PC-3 (cell line): ENCODE measurements at regions of chr6 and their contacts with region 1.

Region 1: DNA sequence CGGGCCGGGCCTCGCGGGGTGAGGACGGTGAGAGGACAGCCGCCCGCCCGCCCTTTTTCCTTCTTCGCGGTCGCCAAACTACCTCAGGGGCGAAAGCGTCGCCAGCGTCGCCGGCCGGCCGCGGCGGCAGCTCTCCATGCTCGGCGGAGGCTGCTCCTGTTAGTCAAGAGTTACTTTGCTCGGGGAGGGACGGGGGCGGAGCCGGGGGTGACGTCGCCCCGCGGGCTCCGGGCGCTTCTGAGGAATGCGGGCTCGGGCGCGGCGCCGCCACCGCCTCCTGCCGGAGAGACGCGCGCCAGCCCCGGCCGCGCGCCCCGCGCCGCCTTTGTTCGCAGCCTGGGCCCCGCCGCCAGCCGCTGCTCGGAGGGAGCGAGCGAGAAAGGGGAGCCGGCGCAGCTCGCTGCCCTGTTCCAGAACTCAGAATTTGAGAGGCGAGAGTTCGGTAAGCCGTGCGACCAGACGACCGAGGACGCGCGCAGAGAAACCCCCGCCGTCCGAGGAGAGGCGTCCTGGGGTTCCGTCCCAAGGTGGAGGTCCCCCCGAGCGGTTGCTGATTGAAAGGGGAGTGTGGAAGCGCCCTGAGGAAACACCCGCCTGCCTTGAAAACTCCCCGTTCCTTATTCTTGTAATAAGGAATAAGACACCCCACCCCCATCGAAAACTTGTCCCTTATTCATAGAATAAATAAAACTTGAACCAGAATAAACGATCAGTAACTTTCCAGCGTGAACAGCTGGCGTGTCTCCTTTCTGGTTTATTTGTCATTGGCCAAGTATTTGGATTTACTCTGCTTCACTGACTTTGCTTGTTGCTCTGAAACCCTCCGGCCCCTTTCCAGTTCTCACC is at the start of gene PTPRK:
- DNase-seq: peak; percentile 89
- ATAC-seq: peak; percentile 74
- H3K4me3 ChIP-seq: peak within 1 kb of the TSS; percentile 94
- H3K27ac ChIP-seq: peak within 1 kb of the TSS; percentile 96
- H3K4me1 ChIP-seq: peaks cover 36% of the 10 kb centered on the region
- H3K27me3 ChIP-seq: no peaks in the 10 kb centered on the region
- CTCF ChIP-seq: 0 out of 2 replicates have a peak, but pooled peaks have one; percentile 25
- total RNA-seq, gene PTPRK: 53.8 and 64.7 TPM in 2 replicates

Region 2: DNA sequence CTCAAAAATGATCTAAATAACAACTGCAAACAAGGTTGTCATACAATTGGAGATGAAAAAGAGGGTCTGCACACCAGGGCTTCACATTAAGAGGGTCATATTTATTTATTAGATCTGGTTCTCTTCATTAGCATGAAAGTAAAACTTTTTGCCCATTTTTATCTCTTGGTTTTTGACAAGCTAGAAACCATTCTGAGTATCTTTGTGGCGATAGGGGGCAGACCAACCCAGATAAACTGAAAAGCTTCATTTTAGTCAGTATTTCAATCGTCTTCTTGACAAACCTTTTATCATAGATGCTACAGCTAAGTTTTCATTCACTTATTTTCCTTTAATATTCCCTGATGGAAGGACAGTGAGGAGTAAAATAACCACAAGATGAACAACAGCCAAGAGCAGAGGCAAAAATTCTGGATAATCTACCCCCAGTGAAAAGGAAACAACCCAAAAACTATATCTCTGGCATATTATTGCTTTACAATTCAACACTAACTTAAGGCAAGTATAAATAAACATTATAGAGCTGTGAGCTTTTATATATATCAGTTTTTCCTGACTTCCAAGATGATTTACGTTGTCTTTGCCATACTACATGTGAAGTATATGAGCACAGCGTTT is 665.0 kb before region 1 on chr6:
- CTCF ChIA-PET with region 1: interaction called, 3 read pairs
- POLR2A ChIA-PET with region 1: no interaction called
- intact Hi-C with region 1: loop called (anchors 5 kb)
- DNase-seq: peak; percentile 58
- ATAC-seq: peak; percentile 50; the same call in 1 of the 2 replicates
- H3K4me3 ChIP-seq: no peak overlapping the region
- H3K27ac ChIP-seq: no peak overlapping the region
- H3K4me1 ChIP-seq: peaks cover 7% of the 10 kb centered on the region; the same call in 1 of the 2 replicates
- H3K27me3 ChIP-seq: no peaks in the 10 kb centered on the region
- CTCF ChIP-seq: peak; percentile 68

Region 3: GRCh38 chr6:128432394-128432793 is 88.3 kb before region 1 on chr6:
- CTCF ChIA-PET with region 1: no interaction called
- POLR2A ChIA-PET with region 1: no interaction called
- intact Hi-C with region 1: loop called (anchors 5 kb)
- DNase-seq: peak; percentile 58
- ATAC-seq: peak; percentile 31; the same call in 1 of the 2 replicates
- H3K4me3 ChIP-seq: no peak overlapping the region
- H3K27ac ChIP-seq: no peak overlapping the region
- H3K4me1 ChIP-seq: peaks cover 7% of the 10 kb centered on the region; the same call in 1 of the 2 replicates
- H3K27me3 ChIP-seq: no peaks in the 10 kb centered on the region
- CTCF ChIP-seq: no peak

Region 4: GRCh38 chr6:128500014-128500413 is 20.6 kb before region 1 on chr6:
- CTCF ChIA-PET with region 1: interaction called, 4 read pairs
- POLR2A ChIA-PET with region 1: interaction called, 11 read pairs
- intact Hi-C with region 1: no loop called
- DNase-seq: peak; percentile 46
- ATAC-seq: peak; percentile 39
- H3K4me3 ChIP-seq: peak overlapping the region; percentile 39; the same call in 1 of the 2 replicates
- H3K27ac ChIP-seq: peak overlapping the region; percentile 98
- H3K4me1 ChIP-seq: peaks cover 65% of the 10 kb centered on the region
- H3K27me3 ChIP-seq: no peaks in the 10 kb centered on the region
- CTCF ChIP-seq: no peak

Region 5: GRCh38 chr6:128600397-128600951 is 79.8 kb after region 1 on chr6:
- CTCF ChIA-PET with region 1: no interaction called
- POLR2A ChIA-PET with region 1: no interaction called
- intact Hi-C with region 1: loop called (anchors 1 kb)
- DNase-seq: peak; percentile 80
- ATAC-seq: peak; percentile 68
- H3K4me3 ChIP-seq: peak overlapping the region; percentile 35; the same call in 1 of the 2 replicates
- H3K27ac ChIP-seq: peak overlapping the region; percentile 95
- H3K4me1 ChIP-seq: peaks cover 54% of the 10 kb centered on the region
- H3K27me3 ChIP-seq: no peaks in the 10 kb centered on the region
- CTCF ChIP-seq: no peak

Region 6: DNA sequence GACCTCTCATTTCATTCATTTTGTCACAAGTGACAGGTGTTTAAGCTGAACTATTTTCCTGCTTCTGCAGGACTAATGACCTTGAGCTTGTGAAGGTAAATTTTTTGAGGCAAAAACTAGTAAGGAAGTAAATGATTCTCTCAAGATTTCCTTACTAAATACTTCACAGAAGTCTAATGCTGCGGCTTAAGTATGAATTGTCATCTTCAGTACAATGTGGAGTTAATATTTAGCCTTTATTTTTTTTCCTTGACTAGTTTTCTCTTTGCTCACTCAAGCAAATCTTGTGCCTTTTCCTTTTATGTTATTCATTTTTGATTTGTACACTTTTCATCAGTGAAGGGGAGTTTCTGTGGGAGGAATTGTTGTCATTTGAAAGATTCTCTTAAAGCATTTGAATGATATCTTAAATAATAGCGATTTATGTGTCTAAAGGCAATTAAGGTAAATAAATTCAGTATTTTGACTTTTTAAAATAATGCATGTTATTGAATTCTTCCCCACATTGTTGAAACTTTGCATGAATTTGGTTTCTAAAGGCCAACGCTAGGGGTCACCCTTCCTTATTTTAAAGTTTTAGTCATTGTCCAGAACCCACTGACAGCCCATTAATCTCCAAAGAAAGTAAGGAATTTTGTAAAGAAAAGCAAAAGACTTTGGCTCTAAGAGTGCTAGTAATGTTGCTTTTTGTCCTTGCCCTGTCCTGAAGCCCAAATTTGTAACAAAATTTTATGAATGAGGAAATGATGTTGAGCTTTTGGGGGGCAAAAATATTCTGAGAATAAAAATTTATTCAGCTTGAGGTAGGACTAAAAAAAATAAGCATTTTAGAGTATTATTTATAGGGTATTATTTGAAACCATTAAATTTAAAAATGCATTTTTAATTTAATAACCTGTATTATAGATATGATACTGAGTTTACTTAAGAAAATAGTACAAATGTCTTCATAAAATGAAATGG is 204.9 kb after region 1 on chr6:
- CTCF ChIA-PET with region 1: interaction called, 4 read pairs
- POLR2A ChIA-PET with region 1: no interaction called
- intact Hi-C with region 1: loop called (anchors 2 kb)
- DNase-seq: peak; percentile 55
- ATAC-seq: no peak
- H3K4me3 ChIP-seq: no peak overlapping the region
- H3K27ac ChIP-seq: no peak overlapping the region
- H3K4me1 ChIP-seq: peaks cover 26% of the 10 kb centered on the region
- H3K27me3 ChIP-seq: no peaks in the 10 kb centered on the region
- CTCF ChIP-seq: peak; percentile 71